ENCODE measurements at regions of chr15 and their contacts with region 1.

Region 1: GRCh38 chr15:39040861-39041260 is 476.2 kb upstream of the RASGRP1 start:
- DNase-seq: no peak

Region 2: DNA sequence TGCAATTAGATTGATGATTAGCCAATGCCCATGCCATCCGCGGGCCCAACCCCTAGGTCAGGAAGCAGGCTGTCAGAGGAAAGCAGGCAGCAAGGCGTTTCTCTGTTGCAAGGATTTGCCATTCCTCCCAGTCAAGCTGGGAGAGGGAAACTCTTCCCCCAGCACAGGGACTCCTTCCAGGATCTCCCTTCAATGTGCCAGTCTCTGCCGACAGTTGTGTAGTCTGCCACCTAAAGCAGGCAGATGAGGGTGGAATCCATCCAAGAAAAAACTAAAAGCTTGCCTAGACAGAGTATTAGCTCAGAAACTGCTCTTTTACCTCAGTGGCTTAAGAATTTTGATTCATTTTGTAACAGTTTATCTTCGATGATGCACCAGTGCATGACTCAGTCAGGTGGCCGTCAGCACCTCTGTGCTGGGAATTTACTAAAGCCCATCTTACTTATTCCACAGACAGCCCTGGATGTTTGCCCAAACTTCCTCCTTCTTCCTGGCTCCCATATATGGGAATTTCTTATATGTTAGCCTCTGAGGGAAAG is 38.5 kb after region 1 on chr15:
- intact Hi-C with region 1: no loop called
- DNase-seq: peak in 2 of 10 donors; percentile 14 to 67

Region 3: DNA sequence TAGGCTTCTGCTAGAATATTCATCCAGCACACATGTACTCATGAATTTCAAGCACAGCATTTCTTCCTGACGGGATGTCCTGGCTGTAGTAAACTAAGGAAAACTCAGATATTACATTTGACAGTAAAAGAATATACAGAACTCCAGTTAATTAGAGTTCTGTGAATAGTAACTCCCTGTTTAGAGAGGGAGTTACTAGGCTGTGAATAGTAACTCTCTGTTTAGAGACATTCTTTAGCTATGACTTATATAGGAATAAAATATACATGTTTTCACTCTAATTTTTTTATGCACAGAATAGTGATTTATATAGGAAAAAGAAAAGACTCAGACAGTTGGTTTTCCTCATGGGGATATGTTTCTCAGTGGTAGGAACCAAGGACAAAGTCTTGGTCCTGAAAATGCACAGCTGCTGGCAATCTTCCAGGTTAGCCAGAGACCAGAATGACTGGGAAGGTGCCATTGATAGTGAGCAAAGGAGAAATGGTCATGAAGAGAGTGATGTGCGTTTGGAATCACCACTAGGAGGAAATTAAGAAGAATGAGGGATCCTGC is 59.3 kb after region 1 on chr15:
- intact Hi-C with region 1: loop called (anchors 10 kb)
- DNase-seq: no peak

Measured in posterior cingulate gyrus (tissue), 11 donors.